ENCODE measurements at regions of chr19 and their contacts with region 1.

Region 1: GRCh38 chr19:39792999-39793546 is 14.4 kb downstream of the LEUTX start:
- DNase-seq: peak; percentile 56 to 80 (median 72)
- ATAC-seq: peak; percentile 94
- H3K4me3 ChIP-seq: peak overlapping the region; percentile 74
- H3K4me3 Mint-ChIP-seq: peak overlapping the region; percentile 58 to 84 (median 80)
- H3K27ac ChIP-seq: no peak overlapping the region
- H3K27ac Mint-ChIP-seq: no peak overlapping the region
- H3K4me1 ChIP-seq: no peaks in the 10 kb centered on the region
- H3K4me1 Mint-ChIP-seq: peaks cover 0 to 7% (median 0%) of the 10 kb centered on the region in 7 donors
- H3K27me3 ChIP-seq: no peaks in the 10 kb centered on the region
- H3K27me3 Mint-ChIP-seq: peaks cover 0 to 18% (median 2%) of the 10 kb centered on the region in 5 donors

Region 2: GRCh38 chr19:39738814-39739213 is 54.3 kb before region 1 on chr19:
- CTCF ChIA-PET with region 1: no interaction called
- POLR2A ChIA-PET with region 1: no interaction called
- intact Hi-C with region 1: no loop called
- DNase-seq: no peak
- ATAC-seq: no peak
- H3K4me3 ChIP-seq: no peak overlapping the region
- H3K4me3 Mint-ChIP-seq: peak overlapping the region in 1 of 10 donors; percentile 14
- H3K27ac ChIP-seq: no peak overlapping the region
- H3K27ac Mint-ChIP-seq: peak overlapping the region in 1 of 9 donors; percentile 58
- H3K4me1 ChIP-seq: peaks cover 0 to 9% of the 10 kb centered on the region in 2 donors
- H3K4me1 Mint-ChIP-seq: peaks cover 14 to 46% (median 32%) of the 10 kb centered on the region in 7 donors
- H3K27me3 ChIP-seq: no peaks in the 10 kb centered on the region
- H3K27me3 Mint-ChIP-seq: peaks cover 0 to 19% (median under 1%) of the 10 kb centered on the region in 5 donors

Region 3: DNA sequence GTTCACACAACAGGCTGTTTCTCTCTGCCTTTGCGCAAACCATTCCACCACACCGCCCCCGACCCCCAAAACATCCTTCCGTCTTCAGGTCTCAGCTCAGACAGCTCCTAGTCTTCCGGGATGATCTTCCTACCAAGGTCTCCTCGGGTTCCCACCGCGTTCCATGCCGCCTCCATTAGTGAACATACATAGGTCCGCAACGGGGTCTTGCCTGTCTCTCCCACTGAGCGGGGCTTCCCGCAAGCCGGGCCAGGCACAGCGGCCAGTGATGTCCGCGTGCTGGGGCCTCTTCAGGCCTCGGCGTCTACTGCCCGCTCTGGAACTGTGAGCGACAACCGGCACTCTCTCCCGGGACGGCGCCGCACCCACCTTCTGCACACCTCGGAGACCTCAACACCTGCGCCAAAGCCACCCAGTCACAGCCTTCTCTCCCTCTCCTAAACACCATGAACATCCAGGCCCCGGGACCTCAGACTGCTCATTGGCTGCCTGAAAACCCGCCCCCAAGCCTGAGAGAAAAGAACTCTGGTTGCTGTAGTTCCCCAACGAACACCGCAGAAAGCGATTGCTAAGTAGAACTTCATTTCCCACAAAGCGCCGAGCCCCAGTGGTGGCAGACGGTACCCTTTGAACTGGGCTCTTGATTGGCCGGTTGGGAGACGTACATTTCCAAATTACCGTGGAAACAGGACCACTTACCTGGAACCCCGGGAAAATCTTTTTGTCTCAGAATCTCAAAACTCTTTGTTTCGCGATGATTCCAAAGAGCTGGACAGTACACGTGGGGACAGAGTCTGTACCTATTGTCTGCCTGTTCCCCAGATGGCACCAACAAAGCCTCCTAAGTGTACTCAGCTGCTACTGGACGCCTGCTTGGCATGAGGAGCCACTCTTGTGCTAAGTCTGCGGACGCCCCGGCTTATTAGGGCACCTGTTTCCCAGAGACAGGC is 31.3 kb after region 1 on chr19:
- CTCF ChIA-PET with region 1: interaction called, 3 read pairs
- POLR2A ChIA-PET with region 1: no interaction called
- intact Hi-C with region 1: loop called in 1 of 2 experiments (anchors 1 kb)
- DNase-seq: peak; percentile 55 to 92 (median 86)
- ATAC-seq: peak; percentile 98
- H3K4me3 ChIP-seq: peak overlapping the region; percentile 85
- H3K4me3 Mint-ChIP-seq: no peak overlapping the region
- H3K27ac ChIP-seq: peak overlapping the region; percentile 72
- H3K27ac Mint-ChIP-seq: no peak overlapping the region
- H3K4me1 ChIP-seq: peaks cover 14 to 19% of the 10 kb centered on the region in 2 donors
- H3K4me1 Mint-ChIP-seq: peaks cover 0 to 19% (median 10%) of the 10 kb centered on the region in 7 donors
- H3K27me3 ChIP-seq: no peaks in the 10 kb centered on the region
- H3K27me3 Mint-ChIP-seq: no peaks in the 10 kb centered on the region

Region 4: DNA sequence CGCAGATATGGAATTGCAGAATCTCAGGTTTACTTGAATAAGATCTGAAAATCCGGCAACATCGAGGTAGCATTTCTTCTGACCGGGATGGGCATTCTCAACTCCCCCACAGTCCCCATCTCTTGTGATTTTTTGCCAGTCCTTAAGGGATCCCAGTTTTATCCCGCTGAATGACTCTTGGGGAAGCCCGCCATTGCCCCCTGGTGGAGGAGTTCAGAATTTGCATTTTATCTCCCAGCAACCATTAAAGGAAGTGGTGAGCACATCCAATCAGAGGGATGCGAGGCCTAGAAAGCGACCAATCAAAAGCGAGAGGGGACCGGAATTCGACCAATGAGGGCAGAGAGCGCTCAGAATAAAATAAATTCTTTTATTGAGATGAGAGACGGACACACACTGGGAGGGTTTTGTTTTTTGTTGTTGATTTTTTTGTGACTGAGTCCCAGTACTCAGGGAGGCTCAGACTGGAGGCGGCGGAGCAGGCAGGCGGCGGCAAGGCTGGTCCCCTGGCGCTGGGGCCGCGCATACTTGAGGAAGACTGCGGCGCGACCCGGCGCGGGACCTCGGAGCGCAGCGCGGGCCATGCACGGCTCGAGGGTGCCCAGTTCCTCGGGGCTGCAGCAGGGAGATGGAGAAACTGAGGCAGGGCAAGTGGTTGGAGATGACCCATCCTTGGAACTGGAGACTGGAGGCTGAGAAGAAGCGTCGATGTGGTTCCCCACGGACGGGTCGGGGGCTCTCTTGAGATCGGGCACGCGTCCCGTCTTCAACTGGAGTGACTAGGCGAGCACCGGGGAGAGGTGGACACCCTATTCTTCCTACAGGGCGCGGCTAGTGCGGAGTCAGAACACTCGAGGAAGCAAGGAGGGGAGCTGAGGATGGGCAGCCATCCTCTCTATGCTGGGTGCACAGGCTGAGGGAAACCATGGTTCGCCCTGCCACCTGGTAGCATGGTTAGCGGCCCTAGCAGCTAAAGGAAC is 429.1 kb after region 1 on chr19:
- CTCF ChIA-PET with region 1: no interaction called
- POLR2A ChIA-PET with region 1: no interaction called
- intact Hi-C with region 1: loop called in 1 of 2 experiments (anchors 1 kb)
- DNase-seq: peak; percentile 54 to 86 (median 82)
- ATAC-seq: peak; percentile 92
- H3K4me3 ChIP-seq: no peak overlapping the region
- H3K4me3 Mint-ChIP-seq: peak overlapping the region; percentile 16 to 85 (median 68)
- H3K27ac ChIP-seq: no peak overlapping the region
- H3K27ac Mint-ChIP-seq: peak overlapping the region; percentile 5 to 85 (median 58)
- H3K4me1 ChIP-seq: peaks cover 4 to 20% of the 10 kb centered on the region in 2 donors
- H3K4me1 Mint-ChIP-seq: peaks cover 12 to 30% (median 24%) of the 10 kb centered on the region in 7 donors
- H3K27me3 ChIP-seq: peaks cover 16 to 35% of the 10 kb centered on the region in 2 donors
- H3K27me3 Mint-ChIP-seq: peaks cover 49 to 70% (median 60%) of the 10 kb centered on the region in 5 donors

Measured in naive thymus-derived CD4-positive, alpha-beta T cell (primary cell).